OCI-LY7 (cell line): ENCODE measurements at regions of chrX and their contacts with region 1.

Region 1: DNA sequence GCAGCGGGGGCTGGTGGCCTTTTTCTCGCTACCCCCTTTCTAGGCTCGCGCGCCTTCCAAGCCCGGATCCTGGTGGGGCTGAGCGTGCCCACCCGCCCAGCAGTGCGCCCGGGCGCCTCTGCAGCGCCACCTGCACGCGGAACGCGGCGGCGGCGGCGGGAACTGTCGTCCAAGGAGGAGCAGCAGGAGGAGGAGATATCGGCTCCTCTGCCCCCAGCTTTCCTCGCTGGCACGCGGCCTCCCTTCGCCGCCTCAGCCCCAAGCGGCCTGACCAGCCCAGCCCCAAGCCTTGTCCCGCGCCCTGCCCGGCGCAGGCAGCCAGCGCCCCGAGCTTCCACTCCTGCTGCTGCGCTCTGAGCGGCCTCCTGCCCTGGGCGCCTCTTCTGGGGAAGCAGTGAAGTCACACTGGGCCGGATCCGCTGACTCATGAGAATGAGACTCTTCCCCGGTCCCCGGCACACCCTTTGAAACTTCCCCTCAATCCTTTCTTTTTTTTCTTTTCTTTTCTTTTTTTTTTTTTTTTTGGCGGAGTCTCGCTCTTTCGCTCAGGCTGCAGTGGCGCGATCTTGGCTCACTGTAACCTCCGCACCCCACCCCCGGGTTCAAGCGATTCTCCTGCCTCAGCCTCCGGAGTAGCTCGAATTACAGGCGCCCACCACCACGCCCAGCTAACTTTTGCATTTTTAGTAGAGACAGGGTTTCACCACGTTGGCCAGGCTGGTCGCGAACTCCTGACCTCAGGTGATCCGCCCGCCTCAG is 10.6 kb upstream of the ELF4 start:
- DNase-seq: peak; percentile 56
- H3K4me3 ChIP-seq: peak overlapping the region; percentile 59
- H3K27ac ChIP-seq: no peak overlapping the region
- H3K4me1 ChIP-seq: peaks cover 13% of the 10 kb centered on the region
- CTCF ChIP-seq: peak; percentile 74

Region 2: GRCh38 chrX:130196466-130196865 is 75.5 kb after region 1 on chrX:
- CTCF ChIA-PET with region 1: no interaction called
- POLR2A ChIA-PET with region 1: no interaction called
- intact Hi-C with region 1: loop called (anchors 2 kb)
- DNase-seq: no peak
- H3K4me3 ChIP-seq: no peak overlapping the region
- H3K27ac ChIP-seq: no peak overlapping the region
- H3K4me1 ChIP-seq: peaks cover 6% of the 10 kb centered on the region
- CTCF ChIP-seq: no peak